Heart left ventricle (tissue), 16 donors: ENCODE measurements at regions of chr6 and their contacts with region 1.

Region 1: DNA sequence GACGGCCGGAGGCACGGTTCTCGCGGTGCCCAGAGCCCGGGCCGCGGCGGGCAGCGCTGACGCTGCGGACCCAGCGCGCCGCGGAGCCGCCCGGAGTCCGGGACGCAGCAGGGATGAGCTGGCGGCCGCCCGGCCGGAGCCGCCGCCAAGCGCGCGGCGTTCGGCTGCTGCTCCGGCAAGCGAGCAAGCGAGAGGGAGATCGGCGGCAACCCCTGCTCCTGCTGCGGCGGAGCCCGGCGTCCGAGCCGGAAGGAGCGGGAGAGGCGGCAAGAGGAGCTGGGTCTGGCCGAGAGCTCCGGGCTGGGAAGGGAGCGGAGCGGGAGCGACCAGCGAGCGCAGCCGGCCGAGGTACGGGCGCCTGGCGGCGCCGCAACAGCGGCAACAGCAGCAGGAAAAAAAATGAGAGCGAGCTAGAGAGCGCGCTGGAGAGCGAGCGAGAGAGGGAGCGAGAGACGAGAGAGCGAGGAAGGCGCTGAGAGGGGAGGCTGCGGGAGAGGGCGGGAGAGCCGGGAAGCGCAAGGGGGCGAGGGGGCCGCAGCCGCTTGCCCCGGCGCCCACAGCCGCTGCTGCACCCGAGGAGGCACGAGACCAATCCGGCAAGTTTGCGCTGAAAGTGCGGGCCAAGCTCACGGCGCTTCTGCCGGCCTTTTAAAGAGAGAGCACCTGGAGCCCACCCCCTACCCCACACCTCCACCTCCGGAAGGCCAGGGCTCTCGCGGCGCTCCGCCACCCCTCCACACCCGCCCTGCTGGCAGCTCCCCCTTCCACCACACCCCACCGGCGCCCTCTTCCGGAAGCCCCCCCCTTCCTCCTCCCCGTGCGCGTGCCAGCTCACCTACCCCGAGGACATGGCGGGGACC is 496 bp downstream of the GRM4 start:
- DNase-seq: peak in 2 of 5 donors; percentile 24 to 64
- ATAC-seq: peak in 3 of 4 donors; percentile 38 to 51 (median 44)
- H3K4me3 ChIP-seq: peak overlapping the region; percentile 16 to 52 (median 40)
- H3K27ac ChIP-seq: no peak overlapping the region
- H3K4me1 ChIP-seq: peaks cover 2 to 37% (median 16%) of the 10 kb centered on the region in 12 donors
- H3K27me3 ChIP-seq: peaks cover 41 to 84% (median 55%) of the 10 kb centered on the region in 9 donors
- CTCF ChIP-seq: no peak
- POLR2A ChIP-seq: no peak

Region 2: DNA sequence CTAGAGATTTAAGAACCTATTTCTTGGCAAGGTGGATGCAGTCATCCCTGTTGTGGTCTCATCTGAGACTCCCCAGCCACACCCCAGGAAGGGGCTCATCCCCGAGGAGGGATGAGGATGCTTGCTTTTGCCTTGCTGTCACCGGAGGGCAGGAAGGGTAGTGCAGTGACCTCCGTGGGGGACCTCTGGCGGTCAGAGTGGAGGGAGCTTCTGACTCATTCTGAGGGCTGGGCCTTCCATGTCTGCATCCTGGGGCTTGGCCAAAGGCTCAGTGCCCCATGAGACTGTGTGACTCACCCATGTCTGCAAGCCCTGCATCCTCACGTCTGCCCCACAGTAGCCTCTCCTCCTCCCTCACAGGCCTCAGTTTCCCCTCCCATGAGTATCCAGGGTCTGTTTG is 472.6 kb before region 1 on chr6:
- intact Hi-C with region 1: no loop called
- DNase-seq: peak; percentile 80 to 95 (median 89)
- ATAC-seq: peak; percentile 93 to 98 (median 96)
- H3K4me3 ChIP-seq: no peak overlapping the region
- H3K27ac ChIP-seq: no peak overlapping the region
- H3K4me1 ChIP-seq: peaks cover 0 to 13% (median 6%) of the 10 kb centered on the region in 12 donors
- H3K27me3 ChIP-seq: no peaks in the 10 kb centered on the region
- CTCF ChIP-seq: peak; percentile 20 to 73 (median 59)
- POLR2A ChIP-seq: no peak

Region 3: DNA sequence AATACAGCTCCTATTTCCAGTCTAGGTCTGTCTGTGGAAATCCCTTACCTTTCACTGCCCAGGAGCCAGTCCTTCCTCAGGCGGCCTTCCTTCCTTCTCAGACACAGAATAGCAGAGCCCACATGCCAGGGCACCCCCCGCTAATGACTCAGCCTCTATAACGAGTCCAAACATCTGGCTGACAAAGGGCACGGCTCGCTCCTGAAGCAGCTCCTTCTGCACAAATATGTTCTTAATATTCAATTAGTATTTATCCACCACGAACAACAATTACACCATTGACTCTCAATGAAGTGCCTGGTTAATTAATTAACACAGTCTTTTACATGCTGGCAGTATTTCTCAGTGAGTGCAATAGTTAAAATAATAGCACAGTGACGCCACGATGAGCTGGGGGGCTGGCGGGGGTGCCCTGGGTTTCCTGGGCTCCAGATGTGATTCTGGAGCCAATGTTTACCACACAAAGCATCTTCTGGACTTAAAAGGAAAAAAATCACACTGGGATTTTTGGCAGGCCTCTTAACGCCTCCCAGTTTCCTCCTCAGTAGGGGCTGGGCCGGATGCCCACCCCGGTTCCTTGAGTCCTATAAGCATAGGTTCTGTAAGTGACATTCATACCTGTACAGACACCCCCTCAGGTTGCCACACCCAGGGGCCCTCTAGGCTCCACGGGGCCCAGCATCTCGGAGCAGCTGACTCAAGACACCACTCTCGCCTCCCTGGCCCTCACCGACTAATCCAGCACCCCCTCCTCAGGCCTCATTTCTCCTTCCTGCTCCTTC is 183.0 kb before region 1 on chr6:
- intact Hi-C with region 1: loop called in 1 of 10 experiments (anchors 5 kb)
- DNase-seq: peak in 1 of 5 donors; percentile 46
- ATAC-seq: no peak
- H3K4me3 ChIP-seq: no peak overlapping the region
- H3K27ac ChIP-seq: no peak overlapping the region
- H3K4me1 ChIP-seq: peaks cover 0 to 8% (median 0%) of the 10 kb centered on the region in 12 donors
- H3K27me3 ChIP-seq: peaks cover 0 to 52% (median 16%) of the 10 kb centered on the region in 9 donors
- CTCF ChIP-seq: no peak
- POLR2A ChIP-seq: no peak